ENCODE measurements at regions of chr10 and their contacts with region 1.

Region 1: GRCh38 chr10:69392481-69393000 is 24.2 kb downstream of the TACR2 start:
- DNase-seq: peak; percentile 74 to 82
- ATAC-seq: peak; percentile 89 to 94
- H3K4me3 ChIP-seq: no peak overlapping the region
- H3K27ac ChIP-seq: peak overlapping the region in 2 of 4 donors; percentile 55 to 56
- H3K4me1 ChIP-seq: peaks cover 0 to 4% of the 10 kb centered on the region in 2 donors
- H3K27me3 ChIP-seq: no peaks in the 10 kb centered on the region
- CTCF ChIP-seq: peak; percentile 97 to 99 (median 98)
- POLR2A ChIP-seq: no peak

Region 2: GRCh38 chr10:68988530-68989316 is 403.8 kb before region 1 on chr10 and contains the start of gene KIFBP:
- in situ Hi-C with region 1: loop called in 1 of 4 experiments (anchors 25 kb)
- intact Hi-C with region 1: no loop called
- DNase-seq: peak; percentile 88 to 92
- ATAC-seq: peak; percentile 98
- H3K4me3 ChIP-seq: peak within 1 kb of the TSS; percentile 90 to 92 (median 90)
- H3K27ac ChIP-seq: peak within 1 kb of the TSS; percentile 78 to 87 (median 84)
- H3K4me1 ChIP-seq: peaks cover 35 to 45% of the 10 kb centered on the region in 2 donors
- H3K27me3 ChIP-seq: no peaks in the 10 kb centered on the region
- CTCF ChIP-seq: peak in 4 of 5 experiments; percentile 17 to 60 (median 44)
- POLR2A ChIP-seq: peak; percentile 57 to 73
- total RNA-seq, gene KIFBP: 24.0 to 41.3 (median 33.9) TPM

Region 3: GRCh38 chr10:69232252-69232651 is 160.3 kb before region 1 on chr10:
- in situ Hi-C with region 1: loop called (anchors 5 kb)
- intact Hi-C with region 1: loop called (anchors 1 kb)
- DNase-seq: no peak
- ATAC-seq: no peak
- H3K4me3 ChIP-seq: no peak overlapping the region
- H3K27ac ChIP-seq: no peak overlapping the region
- H3K4me1 ChIP-seq: no peaks in the 10 kb centered on the region
- H3K27me3 ChIP-seq: no peaks in the 10 kb centered on the region
- CTCF ChIP-seq: no peak
- POLR2A ChIP-seq: no peak

Region 4: DNA sequence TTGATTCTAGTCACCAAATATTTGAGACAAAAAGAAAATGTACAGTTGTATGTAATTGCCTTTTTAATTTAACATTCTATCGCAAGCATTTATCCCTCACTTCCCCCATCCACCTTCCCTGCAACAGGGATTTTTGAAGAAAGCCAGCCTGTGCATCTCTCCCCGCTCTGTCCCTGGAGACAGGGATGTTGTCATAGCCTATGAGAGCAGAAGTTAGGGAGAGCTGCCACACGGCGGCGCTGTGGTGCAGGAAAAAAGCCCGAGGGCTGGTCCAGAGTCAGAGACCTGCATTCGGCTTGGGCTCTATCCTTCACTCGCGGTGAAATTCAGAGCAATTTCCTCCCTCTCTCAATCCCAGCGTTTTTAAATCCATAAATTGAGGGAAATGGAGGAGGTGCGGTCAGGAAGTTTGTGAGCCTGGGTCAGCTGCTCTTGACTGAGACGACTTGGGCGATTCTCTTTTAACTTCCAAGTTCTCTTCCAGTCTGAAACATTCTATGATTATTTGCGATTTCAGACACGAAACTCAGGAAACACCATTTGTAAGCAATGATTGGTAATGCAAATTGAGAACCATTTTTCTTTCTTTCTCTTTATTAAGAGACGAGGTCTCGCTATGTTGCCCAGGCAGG is 154.9 kb before region 1 on chr10:
- in situ Hi-C with region 1: loop called (anchors 5 kb)
- intact Hi-C with region 1: loop called (anchors 1 kb)
- DNase-seq: peak; percentile 59 to 79
- ATAC-seq: peak; percentile 97 to 99
- H3K4me3 ChIP-seq: no peak overlapping the region
- H3K27ac ChIP-seq: no peak overlapping the region
- H3K4me1 ChIP-seq: no peaks in the 10 kb centered on the region
- H3K27me3 ChIP-seq: no peaks in the 10 kb centered on the region
- CTCF ChIP-seq: peak; percentile 82 to 97 (median 96)
- POLR2A ChIP-seq: no peak

Region 5: DNA sequence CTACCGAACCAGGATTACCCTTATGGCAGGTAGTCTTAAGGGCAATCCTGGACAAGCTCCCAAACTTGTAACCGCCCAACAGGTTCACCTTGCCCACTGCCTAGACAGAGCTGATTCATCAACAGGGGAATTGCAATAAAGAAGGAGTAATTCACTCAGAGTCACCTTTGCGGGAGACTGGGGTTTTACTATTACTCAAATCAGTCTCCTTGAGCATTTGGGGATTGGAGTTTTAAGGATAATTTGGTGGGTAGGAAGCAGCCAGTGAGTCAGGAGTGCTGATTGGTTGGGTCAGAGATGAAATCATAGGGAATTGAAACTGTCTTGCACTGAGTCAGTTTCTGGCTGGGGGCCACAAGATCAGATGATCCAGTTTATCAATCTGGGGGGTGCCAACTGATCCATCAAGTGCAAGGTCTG is 88.9 kb before region 1 on chr10:
- in situ Hi-C with region 1: loop called in 1 of 4 experiments (anchors 10 kb)
- intact Hi-C with region 1: no loop called
- DNase-seq: no peak
- ATAC-seq: no peak
- H3K4me3 ChIP-seq: no peak overlapping the region
- H3K27ac ChIP-seq: no peak overlapping the region
- H3K4me1 ChIP-seq: no peaks in the 10 kb centered on the region
- H3K27me3 ChIP-seq: no peaks in the 10 kb centered on the region
- CTCF ChIP-seq: no peak
- POLR2A ChIP-seq: no peak

Region 6: DNA sequence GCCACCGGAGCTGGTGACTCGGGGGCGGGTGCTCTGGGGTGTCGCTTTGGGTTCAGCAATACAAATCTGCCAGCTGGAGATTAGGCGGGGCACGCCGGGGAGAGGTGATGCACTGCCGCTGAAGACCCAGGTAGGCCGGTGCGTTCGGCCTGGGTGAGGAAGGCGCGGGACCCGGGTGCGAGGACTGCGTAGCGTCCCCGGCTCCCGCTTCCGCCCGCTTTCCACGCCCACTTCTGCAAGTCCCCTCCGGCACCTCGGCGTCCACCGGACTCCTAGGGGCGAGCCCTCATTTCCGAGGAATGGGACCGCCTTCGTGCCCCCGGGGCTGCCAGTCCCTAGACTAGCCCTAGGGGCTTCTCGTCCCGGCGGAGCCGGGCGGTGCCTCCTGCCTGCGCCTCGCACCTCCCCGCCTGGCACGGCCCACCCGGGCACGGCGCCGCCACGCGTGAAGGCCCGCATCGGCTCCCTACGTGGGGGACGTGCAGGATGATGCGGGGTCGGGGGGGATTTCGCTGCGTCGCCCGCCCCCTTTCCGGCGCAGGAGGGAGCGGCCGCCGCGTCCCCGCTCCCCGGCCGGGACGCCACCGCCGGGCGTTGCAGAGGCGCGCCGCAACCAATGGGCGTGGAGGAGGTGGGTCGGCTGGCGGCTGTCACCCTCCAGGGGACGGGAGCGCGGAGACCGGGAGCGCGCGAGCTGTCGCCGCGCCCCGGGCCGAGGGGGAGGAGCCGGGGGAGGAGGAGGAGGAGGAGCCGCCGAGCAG is 74.3 kb before region 1 on chr10:
- in situ Hi-C with region 1: loop called in 3 of 4 experiments (anchors 10 kb)
- intact Hi-C with region 1: loop called (anchors 1 kb)
- DNase-seq: peak; percentile 88 to 89
- ATAC-seq: peak; percentile 81 to 84
- H3K4me3 ChIP-seq: peak overlapping the region; percentile 92 to 97 (median 96)
- H3K27ac ChIP-seq: peak overlapping the region; percentile 92 to 98 (median 96)
- H3K4me1 ChIP-seq: peaks cover 34 to 41% of the 10 kb centered on the region in 2 donors
- H3K27me3 ChIP-seq: no peaks in the 10 kb centered on the region
- CTCF ChIP-seq: peak in 1 of 5 experiments; percentile 25
- POLR2A ChIP-seq: no peak

Region 7: DNA sequence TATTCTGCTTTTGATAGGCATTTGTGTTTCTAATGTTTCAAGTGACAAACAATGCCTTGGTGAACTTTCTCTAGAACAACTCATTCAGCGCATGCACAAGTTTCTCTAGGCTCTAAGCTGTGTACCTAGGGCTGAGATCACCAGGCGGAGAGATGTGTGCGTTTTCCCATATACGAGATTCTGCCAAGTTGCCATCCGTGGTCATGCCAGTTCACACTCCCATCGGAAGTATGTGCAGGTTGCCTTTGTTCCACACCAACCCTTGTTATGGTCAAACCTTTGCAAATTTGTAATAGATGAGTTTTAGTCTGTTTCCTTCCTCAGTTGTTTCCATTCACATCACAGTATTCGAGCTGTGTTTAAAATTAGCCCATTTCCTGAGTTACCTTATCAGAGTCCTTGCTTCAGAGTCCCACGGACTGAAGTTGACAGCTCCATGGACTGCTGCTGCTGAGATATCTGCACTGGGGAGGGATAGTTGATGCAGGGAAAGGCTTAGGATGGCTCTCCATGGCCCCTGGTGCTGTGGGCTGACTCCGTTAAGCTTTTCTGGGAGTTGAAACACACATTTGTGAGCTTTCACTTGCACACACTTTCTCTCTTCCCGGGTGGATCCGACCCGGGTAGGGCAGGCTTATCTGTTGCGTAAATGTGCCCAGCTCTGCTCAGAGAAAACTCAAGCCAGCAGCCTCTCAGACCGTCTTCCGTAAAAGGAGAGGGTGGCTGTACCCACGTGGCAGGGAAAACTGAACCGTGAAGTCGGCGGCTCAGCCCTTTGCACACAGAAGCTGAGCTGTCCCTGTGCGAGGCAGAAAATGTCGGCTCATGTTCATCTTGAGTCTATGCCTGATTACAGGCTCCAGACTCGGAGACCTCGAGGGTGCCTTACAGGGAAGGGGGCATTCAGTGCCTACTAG is 64.8 kb before region 1 on chr10:
- in situ Hi-C with region 1: loop called in 1 of 4 experiments (anchors 10 kb)
- intact Hi-C with region 1: no loop called
- DNase-seq: peak; percentile 88 to 93
- ATAC-seq: peak; percentile 96
- H3K4me3 ChIP-seq: peak overlapping the region; percentile 50 to 62 (median 53)
- H3K27ac ChIP-seq: peak overlapping the region; percentile 87 to 97 (median 93)
- H3K4me1 ChIP-seq: peaks cover 67 to 91% of the 10 kb centered on the region in 2 donors
- H3K27me3 ChIP-seq: no peaks in the 10 kb centered on the region
- CTCF ChIP-seq: no peak
- POLR2A ChIP-seq: peak; percentile 72 to 81

Region 8: DNA sequence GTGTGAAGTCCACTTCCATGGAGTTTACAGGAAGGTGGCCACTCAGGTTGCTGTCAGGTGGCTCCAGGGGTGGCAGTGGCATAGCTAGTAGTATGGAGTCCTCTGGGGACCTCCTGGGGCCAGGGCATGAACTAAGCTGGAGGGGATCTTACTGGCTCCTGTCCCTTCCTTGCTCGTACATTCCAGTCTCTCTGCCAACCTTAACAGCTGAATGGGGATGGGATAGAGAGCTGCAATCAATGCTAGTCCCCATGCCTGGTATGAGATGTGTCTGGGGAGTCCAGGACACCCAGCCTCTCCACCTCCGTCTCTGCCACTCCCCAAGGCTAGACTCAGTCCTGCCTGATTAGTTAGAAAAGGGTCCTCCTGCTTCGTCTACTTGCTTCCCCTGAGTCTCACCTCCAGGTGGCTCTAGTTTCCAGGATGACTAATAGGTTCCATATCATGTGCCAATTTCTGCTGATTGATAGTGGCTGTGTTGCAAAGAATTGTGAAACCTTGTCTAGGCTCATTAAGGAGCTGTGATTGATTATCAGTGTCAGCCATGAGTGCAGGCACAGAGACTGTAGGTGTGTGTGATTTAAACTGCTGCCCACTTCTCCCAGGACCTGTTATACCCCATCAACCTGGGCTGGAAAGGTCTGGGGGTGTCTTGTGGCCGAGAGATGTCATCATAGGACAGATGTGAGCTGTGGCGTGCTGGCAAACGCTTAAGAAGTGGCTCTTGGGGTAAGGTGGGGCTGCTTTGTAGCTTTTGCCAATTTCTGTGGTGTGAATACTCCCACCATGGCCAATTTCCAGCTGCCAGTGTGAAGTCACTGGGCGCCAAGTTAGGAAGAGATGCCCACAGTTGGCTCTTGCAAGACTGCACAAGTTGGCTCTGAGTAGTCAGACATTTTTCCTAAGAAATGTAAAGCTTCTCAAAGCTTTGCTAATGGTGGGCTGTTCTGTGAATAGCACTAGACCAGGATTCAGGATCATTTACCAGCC is 469.0 kb after region 1 on chr10:
- in situ Hi-C with region 1: no loop called
- intact Hi-C with region 1: no loop called
- DNase-seq: no peak
- ATAC-seq: peak; percentile 39 to 46
- H3K4me3 ChIP-seq: no peak overlapping the region
- H3K27ac ChIP-seq: no peak overlapping the region
- H3K4me1 ChIP-seq: peaks cover 0 to 3% of the 10 kb centered on the region in 2 donors
- H3K27me3 ChIP-seq: no peaks in the 10 kb centered on the region
- CTCF ChIP-seq: peak in 2 of 5 experiments; percentile 9 to 17
- POLR2A ChIP-seq: no peak